A673 (cell line): ENCODE measurements at regions of chr5 and their contacts with region 1.

Region 1: DNA sequence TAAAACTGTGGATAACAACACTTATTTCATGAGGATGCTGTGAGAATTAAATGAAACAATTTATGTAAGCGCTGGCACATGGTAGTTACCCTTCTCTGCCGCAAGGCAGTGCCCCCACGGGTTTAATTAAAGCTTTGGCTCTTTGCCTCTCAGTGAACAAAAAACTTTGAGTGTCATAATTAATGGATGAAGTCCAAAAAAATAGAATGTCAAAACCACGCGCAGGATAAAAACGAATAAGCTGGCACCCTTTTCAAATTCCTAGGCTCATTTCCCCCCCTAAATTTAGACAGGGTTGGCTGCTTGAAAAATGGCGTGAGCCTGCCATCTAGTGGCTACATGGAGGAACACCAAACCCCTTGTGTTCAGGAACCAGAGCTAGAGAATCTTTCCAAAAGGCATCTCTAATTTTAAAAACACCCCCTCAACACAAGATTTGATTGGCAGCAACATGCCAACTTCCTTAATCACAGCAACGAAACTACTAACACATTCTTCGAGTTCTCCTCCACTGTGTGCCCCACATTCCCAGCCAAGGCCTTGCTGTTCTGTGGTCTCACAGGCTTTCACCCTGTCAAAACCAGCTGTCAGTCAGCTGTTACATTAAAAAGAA is 29.0 kb upstream of the CCNG1 start:
- DNase-seq: peak; percentile 81
- H3K4me3 ChIP-seq: peak overlapping the region; percentile 21
- H3K27ac ChIP-seq: peak overlapping the region; percentile 75
- H3K4me1 ChIP-seq: peaks cover 15% of the 10 kb centered on the region
- H3K27me3 ChIP-seq: no peaks in the 10 kb centered on the region
- CTCF ChIP-seq: peak; percentile 76

Region 2: GRCh38 chr5:161544350-161544765 is 1864.1 kb before region 1 on chr5:
- CTCF ChIA-PET with region 1: no interaction called
- POLR2A ChIA-PET with region 1: no interaction called
- intact Hi-C with region 1: loop called (anchors 1 kb)
- DNase-seq: peak; percentile 52
- H3K4me3 ChIP-seq: no peak overlapping the region
- H3K27ac ChIP-seq: no peak overlapping the region
- H3K4me1 ChIP-seq: peaks cover 10% of the 10 kb centered on the region
- H3K27me3 ChIP-seq: peaks cover 43% of the 10 kb centered on the region
- CTCF ChIP-seq: peak; percentile 75

Region 3: GRCh38 chr5:161851691-161852299 is 1556.6 kb before region 1 on chr5:
- CTCF ChIA-PET with region 1: interaction called, 5 read pairs
- POLR2A ChIA-PET with region 1: no interaction called
- intact Hi-C with region 1: loop called (anchors 5 kb)
- DNase-seq: no peak
- H3K4me3 ChIP-seq: no peak overlapping the region
- H3K27ac ChIP-seq: no peak overlapping the region
- H3K4me1 ChIP-seq: peaks cover 3% of the 10 kb centered on the region
- H3K27me3 ChIP-seq: peaks cover 54% of the 10 kb centered on the region
- CTCF ChIP-seq: peak; percentile 56

Region 4: DNA sequence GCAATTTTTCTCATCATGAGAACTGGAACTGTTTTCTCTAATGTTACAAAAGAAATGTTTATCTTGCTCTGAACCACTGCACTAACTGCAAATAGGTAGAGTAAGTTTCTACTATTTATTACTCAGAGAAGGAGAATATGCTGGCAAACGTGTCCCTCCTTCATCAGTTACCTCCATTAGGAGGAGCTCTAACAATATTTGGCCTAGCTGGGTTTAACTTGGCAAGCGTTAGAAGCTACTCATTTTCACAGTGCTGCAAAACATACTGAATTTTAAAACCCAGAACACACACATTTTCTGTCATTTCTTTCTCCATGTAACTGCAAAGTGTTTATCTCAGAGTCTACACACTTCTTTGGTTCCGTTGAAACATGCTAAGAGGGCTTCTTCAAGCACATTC is 1441.9 kb before region 1 on chr5:
- CTCF ChIA-PET with region 1: no interaction called
- POLR2A ChIA-PET with region 1: no interaction called
- intact Hi-C with region 1: loop called (anchors 5 kb)
- DNase-seq: peak; percentile 27
- H3K4me3 ChIP-seq: no peak overlapping the region
- H3K27ac ChIP-seq: no peak overlapping the region
- H3K4me1 ChIP-seq: no peaks in the 10 kb centered on the region
- H3K27me3 ChIP-seq: peaks cover 2% of the 10 kb centered on the region
- CTCF ChIP-seq: peak; percentile 50

Region 5: GRCh38 chr5:163177971-163178370 is 230.4 kb before region 1 on chr5:
- CTCF ChIA-PET with region 1: no interaction called
- POLR2A ChIA-PET with region 1: no interaction called
- intact Hi-C with region 1: no loop called
- DNase-seq: no peak
- H3K4me3 ChIP-seq: no peak overlapping the region
- H3K27ac ChIP-seq: no peak overlapping the region
- H3K4me1 ChIP-seq: no peaks in the 10 kb centered on the region
- H3K27me3 ChIP-seq: no peaks in the 10 kb centered on the region
- CTCF ChIP-seq: no peak

Region 6: DNA sequence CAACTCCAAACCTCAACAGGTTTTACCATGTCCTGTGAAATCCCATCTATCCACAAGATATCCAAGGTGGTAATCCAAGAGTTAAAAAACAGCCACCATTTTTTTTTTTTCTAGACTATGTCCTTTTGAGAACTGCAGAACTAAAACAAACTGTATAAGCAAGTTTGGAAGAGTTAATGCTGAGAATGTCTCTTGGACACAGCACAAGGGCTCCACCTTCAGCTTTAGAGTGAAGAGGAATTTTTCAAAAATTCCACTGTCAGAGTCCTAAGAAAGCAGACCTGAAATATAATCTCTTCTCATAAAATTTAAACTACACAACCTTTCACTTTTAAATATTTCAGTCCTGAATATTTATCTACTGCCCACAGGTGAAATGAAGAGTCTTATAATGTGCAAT is 138.8 kb before region 1 on chr5:
- CTCF ChIA-PET with region 1: no interaction called
- POLR2A ChIA-PET with region 1: no interaction called
- intact Hi-C with region 1: loop called (anchors 5 kb)
- DNase-seq: peak; percentile 66
- H3K4me3 ChIP-seq: no peak overlapping the region
- H3K27ac ChIP-seq: peak overlapping the region; percentile 43
- H3K4me1 ChIP-seq: peaks cover 23% of the 10 kb centered on the region
- H3K27me3 ChIP-seq: no peaks in the 10 kb centered on the region
- CTCF ChIP-seq: peak; percentile 60

Region 7: DNA sequence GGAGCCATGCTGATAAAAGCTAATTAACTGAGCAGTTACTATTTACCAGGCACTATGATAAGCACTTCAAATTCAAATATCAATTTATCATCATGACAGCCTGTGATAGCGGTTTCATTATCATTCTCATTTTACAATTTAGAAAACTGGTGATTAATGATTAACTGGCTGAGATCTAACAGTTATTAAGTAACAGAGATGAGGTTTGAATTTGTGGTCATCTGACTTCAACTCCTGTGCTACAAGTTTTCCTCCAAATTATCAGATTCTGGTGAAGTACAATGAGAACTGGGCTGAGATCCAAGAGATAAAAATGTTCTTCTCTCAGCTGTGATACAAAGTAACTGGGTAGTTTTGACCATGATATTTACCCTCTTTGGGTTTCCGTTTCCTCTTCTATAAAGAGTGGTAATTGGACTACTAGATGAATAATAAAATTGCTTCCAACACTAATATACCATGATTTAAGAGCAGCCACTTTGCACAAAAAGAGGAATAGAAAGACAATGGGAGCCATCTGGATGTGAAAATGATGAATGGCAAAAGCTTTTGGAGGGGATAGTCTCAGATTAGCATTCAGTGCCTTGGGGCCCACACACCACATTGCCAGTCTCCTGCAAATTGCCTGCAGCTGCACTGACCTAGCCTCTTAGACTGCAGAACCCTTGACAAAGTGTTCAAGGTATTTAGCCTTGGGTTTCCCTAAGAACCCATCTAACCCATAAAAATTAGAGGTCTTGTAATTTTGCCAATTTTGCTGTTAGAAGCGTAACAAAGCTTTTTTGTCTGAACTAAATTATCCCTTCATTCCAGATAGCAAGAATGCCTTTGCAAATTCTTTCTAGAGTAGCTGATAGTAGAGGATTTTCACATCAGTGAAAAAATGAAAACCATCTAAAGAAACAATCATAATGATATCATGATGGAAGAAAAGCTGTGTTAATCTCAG is 45.3 kb before region 1 on chr5:
- CTCF ChIA-PET with region 1: no interaction called
- POLR2A ChIA-PET with region 1: no interaction called
- intact Hi-C with region 1: loop called (anchors 5 kb)
- DNase-seq: peak; percentile 93
- H3K4me3 ChIP-seq: no peak overlapping the region
- H3K27ac ChIP-seq: peak overlapping the region; percentile 13
- H3K4me1 ChIP-seq: peaks cover 20% of the 10 kb centered on the region
- H3K27me3 ChIP-seq: no peaks in the 10 kb centered on the region
- CTCF ChIP-seq: no peak

Region 8: DNA sequence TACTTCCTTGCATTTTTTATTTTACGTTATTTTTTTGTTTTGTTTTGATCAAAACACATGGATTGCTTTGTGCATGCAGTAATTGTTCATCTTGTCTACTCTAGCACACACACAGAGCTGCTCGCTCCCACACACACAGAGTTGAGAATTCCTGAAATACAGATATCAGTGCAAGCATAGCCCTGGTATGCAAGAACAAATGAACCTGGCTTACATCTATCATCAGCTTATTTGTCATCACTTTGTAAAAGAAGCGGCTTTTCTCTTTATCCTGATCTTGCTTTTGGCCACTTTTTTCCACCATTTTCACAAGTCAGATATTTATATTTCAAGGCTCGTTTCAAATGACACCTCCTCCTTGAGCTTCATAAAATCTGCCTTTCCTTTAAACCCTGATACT is 1532.7 kb after region 1 on chr5:
- CTCF ChIA-PET with region 1: no interaction called
- POLR2A ChIA-PET with region 1: no interaction called
- intact Hi-C with region 1: no loop called
- DNase-seq: no peak
- H3K4me3 ChIP-seq: no peak overlapping the region
- H3K27ac ChIP-seq: no peak overlapping the region
- H3K4me1 ChIP-seq: no peaks in the 10 kb centered on the region
- H3K27me3 ChIP-seq: no peaks in the 10 kb centered on the region
- CTCF ChIP-seq: no peak